ENCODE measurements at regions of chr18 and their contacts with region 1.

Region 1: GRCh38 chr18:12921178-12921577 is 26.6 kb upstream of the SEH1L start:
- DNase-seq: peak; percentile 55 to 77
- ATAC-seq: peak; percentile 90 to 95 (median 92)
- H3K4me3 ChIP-seq: peak overlapping the region; percentile 18
- H3K4me3 Mint-ChIP-seq: peak overlapping the region; percentile 66
- H3K27ac ChIP-seq: peak overlapping the region; percentile 78
- H3K27ac Mint-ChIP-seq: peak overlapping the region; percentile 87 to 89
- H3K4me1 ChIP-seq: peaks cover 30% of the 10 kb centered on the region
- H3K4me1 Mint-ChIP-seq: peaks cover 18 to 25% of the 10 kb centered on the region in 2 donors
- H3K27me3 ChIP-seq: no peaks in the 10 kb centered on the region
- H3K27me3 Mint-ChIP-seq: peaks cover 18 to 19% of the 10 kb centered on the region in 2 donors
- CTCF ChIP-seq: no peak

Region 2: DNA sequence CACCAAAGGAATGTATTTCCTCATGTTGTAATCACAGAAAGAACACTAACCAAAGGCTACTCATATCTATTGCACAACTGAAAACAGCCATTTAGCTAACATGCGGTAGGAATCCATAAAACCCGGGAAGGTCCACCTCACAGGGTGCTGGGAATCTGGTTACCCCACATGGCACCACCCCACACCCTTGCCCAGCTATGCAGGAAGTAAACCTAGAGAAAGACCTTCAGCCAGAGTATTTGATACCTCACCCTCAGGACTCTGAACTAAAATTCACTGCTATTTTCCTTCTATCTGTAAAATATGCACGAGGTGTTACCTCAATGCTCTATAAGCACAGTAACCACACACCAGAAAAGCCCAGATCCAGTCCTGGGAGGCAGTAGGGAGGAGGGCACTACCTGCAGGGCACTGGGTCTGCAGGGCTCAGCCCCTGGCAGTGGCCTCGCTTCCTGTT is 83.0 kb before region 1 on chr18:
- intact Hi-C with region 1: loop called (anchors 1 kb)
- DNase-seq: peak; percentile 32 to 35
- ATAC-seq: peak in 2 of 3 donors; percentile 3 to 14
- H3K4me3 ChIP-seq: peak overlapping the region; percentile 1
- H3K4me3 Mint-ChIP-seq: peak overlapping the region; percentile 92
- H3K27ac ChIP-seq: peak overlapping the region; percentile 73
- H3K27ac Mint-ChIP-seq: peak overlapping the region; percentile 92 to 98
- H3K4me1 ChIP-seq: peaks cover 31% of the 10 kb centered on the region
- H3K4me1 Mint-ChIP-seq: peaks cover 63% of the 10 kb centered on the region in 2 donors
- H3K27me3 ChIP-seq: no peaks in the 10 kb centered on the region
- H3K27me3 Mint-ChIP-seq: no peaks in the 10 kb centered on the region
- CTCF ChIP-seq: no peak

Region 3: GRCh38 chr18:12883684-12884405 is 37.3 kb before region 1 on chr18 and contains the start of gene PTPN2:
- intact Hi-C with region 1: loop called (anchors 1 kb)
- DNase-seq: peak; percentile 89 to 98
- ATAC-seq: peak; percentile 80 to 93 (median 83)
- H3K4me3 ChIP-seq: peak within 1 kb of the TSS; percentile 80
- H3K4me3 Mint-ChIP-seq: peak within 1 kb of the TSS; percentile 97
- H3K27ac ChIP-seq: peak within 1 kb of the TSS; percentile 100
- H3K27ac Mint-ChIP-seq: peak within 1 kb of the TSS; percentile 86 to 94
- H3K4me1 ChIP-seq: peaks cover 37% of the 10 kb centered on the region
- H3K4me1 Mint-ChIP-seq: peaks cover 56 to 70% of the 10 kb centered on the region in 2 donors
- H3K27me3 ChIP-seq: no peaks in the 10 kb centered on the region
- H3K27me3 Mint-ChIP-seq: no peaks in the 10 kb centered on the region
- CTCF ChIP-seq: no peak
- total RNA-seq, gene PTPN2: 110 to 115 (median 112) TPM

Region 4: DNA sequence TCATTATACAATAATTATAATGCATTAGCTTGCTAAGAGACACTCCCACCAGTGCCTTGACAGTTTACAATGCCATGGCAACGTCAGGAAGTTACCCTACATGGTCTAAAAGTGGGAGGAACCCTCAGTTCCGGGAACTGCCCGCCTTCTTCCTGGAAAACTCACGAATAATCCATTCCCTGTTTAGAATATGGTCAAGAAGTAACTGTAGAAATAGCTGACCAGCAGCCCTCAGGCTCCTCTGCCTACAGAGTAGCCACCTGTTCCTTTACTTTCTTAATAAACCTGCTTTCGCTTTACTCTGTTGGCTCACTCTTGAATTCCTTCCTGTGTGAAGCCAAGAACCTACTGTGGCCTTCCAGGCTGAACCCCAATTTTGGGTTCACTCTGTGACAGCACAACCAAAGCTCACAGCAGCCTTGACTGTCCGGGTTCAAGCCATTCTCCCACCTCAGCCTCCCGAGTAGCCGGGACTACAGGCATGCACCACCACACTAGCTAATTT is 17.1 kb before region 1 on chr18:
- intact Hi-C with region 1: loop called (anchors 2 kb)
- DNase-seq: peak in 1 of 2 donors; percentile 53
- ATAC-seq: peak; percentile 74 to 89 (median 88)
- H3K4me3 ChIP-seq: peak overlapping the region; percentile 19
- H3K4me3 Mint-ChIP-seq: peak overlapping the region; percentile 84
- H3K27ac ChIP-seq: peak overlapping the region; percentile 69
- H3K27ac Mint-ChIP-seq: peak overlapping the region; percentile 86 to 90
- H3K4me1 ChIP-seq: peaks cover 19% of the 10 kb centered on the region
- H3K4me1 Mint-ChIP-seq: peaks cover 8 to 13% of the 10 kb centered on the region in 2 donors
- H3K27me3 ChIP-seq: no peaks in the 10 kb centered on the region
- H3K27me3 Mint-ChIP-seq: peaks cover 0 to 3% of the 10 kb centered on the region in 2 donors
- CTCF ChIP-seq: no peak

Region 5: DNA sequence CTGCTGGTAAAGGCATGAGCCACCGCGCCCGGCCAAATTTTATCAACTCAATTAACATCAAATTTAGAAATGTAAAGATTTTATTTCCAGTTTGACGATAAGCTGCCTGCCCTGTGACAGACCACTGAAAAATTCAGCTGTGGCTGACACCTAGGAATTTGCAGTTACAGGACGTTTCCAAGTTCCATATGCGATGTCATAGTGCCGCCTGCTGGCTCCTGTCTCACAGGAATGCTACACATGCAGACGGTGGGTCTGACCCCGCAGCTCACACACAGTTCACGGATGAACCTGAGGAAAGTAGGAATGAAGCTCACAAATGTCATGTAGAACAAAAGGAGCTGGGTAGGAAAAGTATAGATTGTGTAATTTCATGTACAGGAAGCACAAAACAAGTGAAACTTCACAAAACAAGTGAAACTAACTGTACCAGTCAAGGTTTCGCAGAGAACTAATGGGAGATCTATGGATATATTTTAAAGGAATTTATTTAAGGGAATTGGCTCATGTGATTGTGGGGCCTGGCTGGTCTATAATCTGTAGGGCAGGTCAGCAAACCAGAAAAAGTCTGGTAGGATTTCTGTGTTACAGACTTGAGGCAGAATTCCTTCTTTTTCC is 13.4 kb after region 1 on chr18:
- intact Hi-C with region 1: loop called (anchors 1 kb)
- DNase-seq: peak; percentile 76 to 91
- ATAC-seq: peak; percentile 82 to 89 (median 86)
- H3K4me3 ChIP-seq: no peak overlapping the region
- H3K4me3 Mint-ChIP-seq: peak overlapping the region; percentile 7
- H3K27ac ChIP-seq: no peak overlapping the region
- H3K27ac Mint-ChIP-seq: peak overlapping the region in 1 of 2 donors; percentile 7
- H3K4me1 ChIP-seq: peaks cover 16% of the 10 kb centered on the region
- H3K4me1 Mint-ChIP-seq: peaks cover 19 to 27% of the 10 kb centered on the region in 2 donors
- H3K27me3 ChIP-seq: no peaks in the 10 kb centered on the region
- H3K27me3 Mint-ChIP-seq: peaks cover 38 to 47% of the 10 kb centered on the region in 2 donors
- CTCF ChIP-seq: peak; percentile 97

Region 6: GRCh38 chr18:12990967-12991838 is 70.0 kb after region 1 on chr18 and contains the start of gene CEP192:
- intact Hi-C with region 1: loop called (anchors 2 kb)
- DNase-seq: peak; percentile 95 to 99
- ATAC-seq: peak; percentile 92 to 96 (median 94)
- H3K4me3 ChIP-seq: peak within 1 kb of the TSS; percentile 56
- H3K4me3 Mint-ChIP-seq: peak within 1 kb of the TSS; percentile 97
- H3K27ac ChIP-seq: peak within 1 kb of the TSS; percentile 82
- H3K27ac Mint-ChIP-seq: peak within 1 kb of the TSS; percentile 83 to 91
- H3K4me1 ChIP-seq: peaks cover 21% of the 10 kb centered on the region
- H3K4me1 Mint-ChIP-seq: peaks cover 37 to 39% of the 10 kb centered on the region in 2 donors
- H3K27me3 ChIP-seq: no peaks in the 10 kb centered on the region
- H3K27me3 Mint-ChIP-seq: peaks cover 0 to 3% of the 10 kb centered on the region in 2 donors
- CTCF ChIP-seq: peak; percentile 22
- total RNA-seq, gene CEP192: 41.3 to 47.9 (median 43.4) TPM